MCF 10A (cell line): ENCODE measurements at regions of chr16 and their contacts with region 1.

Region 1: DNA sequence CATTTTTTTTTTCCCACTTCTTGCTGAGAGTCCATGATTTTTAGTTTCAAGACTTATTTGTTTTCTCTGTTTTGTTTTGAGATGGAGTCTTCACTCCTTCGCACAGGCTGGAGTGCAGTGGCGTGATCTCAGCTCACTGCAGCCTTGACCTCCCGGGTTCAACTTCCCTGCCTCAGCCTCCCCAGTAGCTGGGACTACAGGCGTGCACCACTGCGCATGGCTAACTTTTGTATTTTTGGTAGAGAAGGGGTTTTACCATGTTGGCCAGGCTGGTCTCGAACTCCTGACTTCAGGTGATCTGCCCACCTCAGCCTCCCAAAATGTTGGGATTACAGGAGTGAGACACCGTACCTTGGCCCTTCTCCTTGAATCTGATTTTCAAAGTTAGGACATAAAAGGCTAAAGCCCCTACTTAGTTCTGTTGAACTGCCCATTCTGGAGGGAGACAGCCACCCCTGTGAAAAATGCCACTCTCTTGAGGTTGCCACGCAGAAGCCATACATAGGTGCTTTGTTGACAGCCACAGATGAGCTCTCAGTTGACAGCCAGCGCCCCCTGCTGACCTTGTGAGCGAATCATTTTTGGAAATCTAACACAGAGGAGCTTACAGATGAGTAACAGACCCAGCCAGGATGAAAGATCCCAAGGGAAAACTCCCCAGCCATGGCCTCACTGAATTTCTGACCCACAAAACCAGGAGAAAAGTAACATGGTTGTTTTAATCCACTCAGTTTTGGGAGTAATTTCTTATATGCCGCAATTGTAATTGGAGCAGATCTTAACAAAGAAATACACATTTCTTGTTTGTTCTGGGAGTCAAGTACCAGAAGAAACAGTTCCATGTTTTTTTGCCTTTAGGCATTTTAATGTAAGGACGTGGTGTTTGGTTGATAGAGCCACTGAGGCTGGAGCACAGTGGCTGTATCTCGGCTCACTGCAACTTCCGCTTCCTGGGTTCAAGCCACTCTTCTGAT is 38.8 kb downstream of the PKD1L3 start:
- DNase-seq: peak; percentile 89
- H3K4me3 Mint-ChIP-seq: no peak overlapping the region
- H3K27ac Mint-ChIP-seq: no peak overlapping the region
- H3K4me1 Mint-ChIP-seq: no peaks in the 10 kb centered on the region
- H3K27me3 Mint-ChIP-seq: peaks cover 13% of the 10 kb centered on the region
- CTCF ChIP-seq: peak; percentile 76

Region 2: GRCh38 chr16:71645453-71645852 is 315.9 kb before region 1 on chr16:
- CTCF ChIA-PET with region 1: no interaction called
- POLR2A ChIA-PET with region 1: no interaction called
- intact Hi-C with region 1: loop called (anchors 5 kb)
- DNase-seq: peak; percentile 34
- H3K4me3 Mint-ChIP-seq: no peak overlapping the region
- H3K27ac Mint-ChIP-seq: no peak overlapping the region
- H3K4me1 Mint-ChIP-seq: no peaks in the 10 kb centered on the region
- H3K27me3 Mint-ChIP-seq: no peaks in the 10 kb centered on the region
- CTCF ChIP-seq: peak; percentile 24

Region 3: GRCh38 chr16:71808593-71809459 is 152.5 kb before region 1 on chr16 and contains the start of gene AP1G1:
- CTCF ChIA-PET with region 1: interaction called, 3 read pairs
- POLR2A ChIA-PET with region 1: interaction called, 5 read pairs
- intact Hi-C with region 1: loop called (anchors 1 kb)
- DNase-seq: peak; percentile 97
- H3K4me3 Mint-ChIP-seq: peak within 1 kb of the TSS; percentile 84
- H3K27ac Mint-ChIP-seq: peak within 1 kb of the TSS; percentile 100
- H3K4me1 Mint-ChIP-seq: no peaks in the 10 kb centered on the region
- H3K27me3 Mint-ChIP-seq: no peaks in the 10 kb centered on the region
- CTCF ChIP-seq: no peak
- total RNA-seq, gene AP1G1: 99.5 and 100 TPM in 2 replicates

Region 4: GRCh38 chr16:71894921-71895678 is 66.3 kb before region 1 on chr16 and contains the start of gene IST1:
- CTCF ChIA-PET with region 1: interaction called, 10 read pairs
- POLR2A ChIA-PET with region 1: interaction called, 7 read pairs
- intact Hi-C with region 1: no loop called
- DNase-seq: peak; percentile 98
- H3K4me3 Mint-ChIP-seq: peak within 1 kb of the TSS; percentile 87
- H3K27ac Mint-ChIP-seq: peak within 1 kb of the TSS; percentile 96
- H3K4me1 Mint-ChIP-seq: peaks cover 6% of the 10 kb centered on the region
- H3K27me3 Mint-ChIP-seq: no peaks in the 10 kb centered on the region
- CTCF ChIP-seq: no peak
- total RNA-seq, gene IST1: 127 TPM in 2 replicates

Region 5: GRCh38 chr16:71933913-71934695 is 27.2 kb before region 1 on chr16:
- CTCF ChIA-PET with region 1: interaction called, 12 read pairs
- POLR2A ChIA-PET with region 1: no interaction called
- intact Hi-C with region 1: no loop called
- DNase-seq: peak; percentile 8
- H3K4me3 Mint-ChIP-seq: no peak overlapping the region
- H3K27ac Mint-ChIP-seq: no peak overlapping the region
- H3K4me1 Mint-ChIP-seq: peaks cover 7% of the 10 kb centered on the region
- H3K27me3 Mint-ChIP-seq: no peaks in the 10 kb centered on the region
- CTCF ChIP-seq: no peak